Dorsolateral prefrontal cortex (tissue), 120 donors: ENCODE measurements at regions of chr1 and their contacts with region 1.

Region 1: GRCh38 chr1:154878371-154879022 is 8.4 kb upstream of the KCNN3 start:
- DNase-seq: peak; percentile 78 to 90 (median 82)
- H3K4me3 ChIP-seq: peak overlapping the region in 26 of 59 donors; percentile 6 to 47 (median 32)
- H3K27ac ChIP-seq: no peak overlapping the region
- H3K27me3 ChIP-seq: no peaks in the 10 kb centered on the region
- CTCF ChIP-seq: peak; percentile 54 to 97 (median 92)

Region 2: GRCh38 chr1:154714638-154715037 is 163.9 kb before region 1 on chr1:
- intact Hi-C with region 1: no loop called
- DNase-seq: no peak
- H3K4me3 ChIP-seq: no peak overlapping the region
- H3K27ac ChIP-seq: no peak overlapping the region
- H3K27me3 ChIP-seq: no peaks in the 10 kb centered on the region
- CTCF ChIP-seq: no peak

Region 3: DNA sequence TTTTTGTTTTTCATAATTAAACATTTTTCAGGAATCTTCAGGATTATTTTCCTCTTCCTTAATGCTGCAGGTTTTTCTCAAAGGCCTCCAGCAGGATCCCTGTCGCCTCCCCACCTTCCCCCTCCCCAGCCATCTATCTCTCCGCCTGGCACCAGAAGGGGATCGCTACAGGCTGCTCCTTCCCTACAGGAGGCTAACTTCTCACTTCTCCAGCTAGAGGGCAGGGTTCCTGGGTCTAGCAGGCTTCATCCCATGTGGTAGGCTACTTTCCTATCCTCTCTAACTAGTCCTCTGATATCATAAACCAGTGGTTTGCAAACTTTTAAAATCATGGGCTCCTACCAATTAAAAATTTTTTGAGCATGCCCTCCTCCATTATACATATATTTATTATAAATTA is 112.5 kb before region 1 on chr1:
- intact Hi-C with region 1: loop called in 1 of 2 experiments (anchors 5 kb)
- DNase-seq: peak in 1 of 10 donors; percentile 35
- H3K4me3 ChIP-seq: no peak overlapping the region
- H3K27ac ChIP-seq: no peak overlapping the region
- H3K27me3 ChIP-seq: peaks cover 0 to 3% (median 0%) of the 10 kb centered on the region in 45 donors
- CTCF ChIP-seq: peak in 38 of 56 donors; percentile 10 to 58 (median 30)

Region 4: GRCh38 chr1:154777154-154777553 is 101.3 kb before region 1 on chr1:
- intact Hi-C with region 1: no loop called
- DNase-seq: peak in 1 of 10 donors; percentile 60
- H3K4me3 ChIP-seq: no peak overlapping the region
- H3K27ac ChIP-seq: peak overlapping the region in 13 of 59 donors; percentile 5 to 63 (median 22)
- H3K27me3 ChIP-seq: no peaks in the 10 kb centered on the region
- CTCF ChIP-seq: no peak